WTC11 (cell line): ENCODE measurements at regions of chr13 and their contacts with region 1.

Region 1: GRCh38 chr13:98653463-98653985 is 76.6 kb upstream of the STK24 start:
- DNase-seq: peak; percentile 88
- ATAC-seq: peak; percentile 97
- H3K4me3 Mint-ChIP-seq: no peak overlapping the region
- H3K27ac Mint-ChIP-seq: peak overlapping the region; percentile 58; the same call in 1 of the 2 replicates
- H3K4me1 Mint-ChIP-seq: peaks cover 8% of the 10 kb centered on the region; the same call in 1 of the 2 replicates
- H3K27me3 Mint-ChIP-seq: no peaks in the 10 kb centered on the region; the same call in 1 of the 2 replicates
- CTCF ChIP-seq: peak; percentile 66

Region 2: DNA sequence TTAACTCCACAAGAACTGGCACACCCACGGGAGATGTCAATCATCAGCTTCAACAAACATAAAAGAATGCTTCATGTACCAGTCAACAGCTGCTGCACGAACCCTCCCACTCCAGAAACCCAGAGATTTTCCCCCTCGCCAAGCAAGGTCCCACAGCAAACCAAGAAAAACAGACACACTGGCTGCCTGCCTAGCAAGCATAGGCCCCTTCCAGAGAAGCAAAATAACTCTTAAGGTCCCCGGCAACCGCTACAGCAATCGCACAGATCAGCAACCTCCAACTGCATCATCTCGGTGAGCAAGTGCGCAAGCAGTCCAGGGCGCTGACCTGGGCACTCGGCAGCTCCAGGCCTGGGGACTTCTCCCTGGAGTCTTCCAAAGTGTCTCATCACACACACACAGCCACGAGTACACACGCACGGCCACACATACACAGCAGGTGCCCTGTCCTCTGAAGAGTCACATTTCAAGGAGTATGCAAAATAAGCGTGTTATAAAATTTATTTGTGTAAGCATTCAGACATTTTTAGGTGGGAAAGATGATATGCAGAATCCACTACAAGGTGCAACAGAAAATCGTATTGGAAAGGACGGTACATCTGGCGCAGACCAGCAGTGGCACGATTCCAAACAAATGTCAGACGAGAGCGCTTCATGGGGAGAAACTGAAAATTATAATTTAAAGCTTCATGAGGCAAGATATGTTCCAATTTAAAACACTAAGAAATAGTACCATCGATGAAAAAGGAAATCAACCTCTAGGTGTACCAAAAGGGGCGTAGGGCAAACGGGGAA is 201.7 kb before region 1 on chr13:
- CTCF ChIA-PET with region 1: interaction called, 67 read pairs
- POLR2A ChIA-PET with region 1: no interaction called
- DNase-seq: no peak
- ATAC-seq: no peak
- H3K4me3 Mint-ChIP-seq: no peak overlapping the region
- H3K27ac Mint-ChIP-seq: peak overlapping the region; percentile 28
- H3K4me1 Mint-ChIP-seq: peaks cover 28% of the 10 kb centered on the region
- H3K27me3 Mint-ChIP-seq: no peaks in the 10 kb centered on the region
- CTCF ChIP-seq: no peak

Region 3: GRCh38 chr13:98466634-98467236 is 186.8 kb before region 1 on chr13:
- CTCF ChIA-PET with region 1: interaction called, 14 read pairs
- POLR2A ChIA-PET with region 1: no interaction called
- DNase-seq: peak; percentile 87
- ATAC-seq: peak; percentile 90
- H3K4me3 Mint-ChIP-seq: no peak overlapping the region
- H3K27ac Mint-ChIP-seq: no peak overlapping the region
- H3K4me1 Mint-ChIP-seq: peaks cover 18% of the 10 kb centered on the region
- H3K27me3 Mint-ChIP-seq: no peaks in the 10 kb centered on the region
- CTCF ChIP-seq: peak; percentile 74

Region 4: DNA sequence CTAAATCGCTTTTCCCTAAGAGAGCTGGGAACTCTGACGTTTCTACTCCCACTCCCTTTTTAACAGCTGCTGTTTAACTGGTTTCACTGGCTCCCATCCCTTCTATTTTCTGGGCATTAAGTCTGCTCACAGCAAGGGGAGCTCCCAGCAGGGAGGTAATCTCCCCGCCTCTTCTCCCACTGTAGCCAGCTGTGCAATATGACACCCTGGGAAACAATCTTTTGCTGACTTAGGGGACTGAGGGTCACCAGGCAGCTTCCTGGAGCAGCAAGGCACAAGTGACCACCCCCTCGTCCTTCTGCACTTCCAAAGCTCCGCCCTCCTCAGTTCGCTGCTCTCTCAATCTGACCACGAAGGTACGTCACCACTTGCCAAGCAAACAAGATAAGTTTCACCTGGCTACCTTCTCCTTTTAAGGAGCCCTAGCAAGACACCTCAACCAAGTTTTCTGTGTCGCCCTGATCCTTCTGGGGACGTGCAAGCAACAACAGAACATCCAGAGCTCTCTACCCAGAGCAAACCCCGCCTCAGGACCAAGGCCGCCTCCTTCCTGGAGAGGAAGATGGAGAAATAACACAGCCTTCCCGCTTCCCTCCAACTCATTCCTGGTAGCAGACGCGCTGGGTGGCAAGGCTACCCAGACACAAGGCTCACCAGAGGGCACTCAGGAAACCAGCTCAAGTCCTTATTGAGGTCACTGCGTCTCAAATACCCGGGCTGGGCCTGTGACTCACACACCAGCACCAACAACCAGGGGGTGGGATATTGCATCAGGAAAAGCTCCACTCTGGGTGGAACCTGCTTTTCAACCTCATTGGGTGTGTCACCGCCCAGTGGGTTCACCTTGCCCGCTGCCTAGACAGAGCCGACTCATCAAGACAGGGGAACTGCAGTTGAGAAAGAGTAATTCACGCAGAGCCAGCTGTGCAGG is 169.0 kb before region 1 on chr13:
- CTCF ChIA-PET with region 1: interaction called, 72 read pairs
- POLR2A ChIA-PET with region 1: no interaction called
- DNase-seq: peak; percentile 71
- ATAC-seq: peak; percentile 80
- H3K4me3 Mint-ChIP-seq: peak overlapping the region; percentile 50
- H3K27ac Mint-ChIP-seq: peak overlapping the region; percentile 93
- H3K4me1 Mint-ChIP-seq: peaks cover 89% of the 10 kb centered on the region
- H3K27me3 Mint-ChIP-seq: no peaks in the 10 kb centered on the region
- CTCF ChIP-seq: no peak

Region 5: GRCh38 chr13:98509271-98510155 is 144.0 kb before region 1 on chr13:
- CTCF ChIA-PET with region 1: interaction called, 12 read pairs
- POLR2A ChIA-PET with region 1: no interaction called
- DNase-seq: no peak
- ATAC-seq: no peak
- H3K4me3 Mint-ChIP-seq: no peak overlapping the region
- H3K27ac Mint-ChIP-seq: peak overlapping the region; percentile 46; the same call in 1 of the 2 replicates
- H3K4me1 Mint-ChIP-seq: peaks cover 65% of the 10 kb centered on the region
- H3K27me3 Mint-ChIP-seq: no peaks in the 10 kb centered on the region
- CTCF ChIP-seq: no peak

Region 6: DNA sequence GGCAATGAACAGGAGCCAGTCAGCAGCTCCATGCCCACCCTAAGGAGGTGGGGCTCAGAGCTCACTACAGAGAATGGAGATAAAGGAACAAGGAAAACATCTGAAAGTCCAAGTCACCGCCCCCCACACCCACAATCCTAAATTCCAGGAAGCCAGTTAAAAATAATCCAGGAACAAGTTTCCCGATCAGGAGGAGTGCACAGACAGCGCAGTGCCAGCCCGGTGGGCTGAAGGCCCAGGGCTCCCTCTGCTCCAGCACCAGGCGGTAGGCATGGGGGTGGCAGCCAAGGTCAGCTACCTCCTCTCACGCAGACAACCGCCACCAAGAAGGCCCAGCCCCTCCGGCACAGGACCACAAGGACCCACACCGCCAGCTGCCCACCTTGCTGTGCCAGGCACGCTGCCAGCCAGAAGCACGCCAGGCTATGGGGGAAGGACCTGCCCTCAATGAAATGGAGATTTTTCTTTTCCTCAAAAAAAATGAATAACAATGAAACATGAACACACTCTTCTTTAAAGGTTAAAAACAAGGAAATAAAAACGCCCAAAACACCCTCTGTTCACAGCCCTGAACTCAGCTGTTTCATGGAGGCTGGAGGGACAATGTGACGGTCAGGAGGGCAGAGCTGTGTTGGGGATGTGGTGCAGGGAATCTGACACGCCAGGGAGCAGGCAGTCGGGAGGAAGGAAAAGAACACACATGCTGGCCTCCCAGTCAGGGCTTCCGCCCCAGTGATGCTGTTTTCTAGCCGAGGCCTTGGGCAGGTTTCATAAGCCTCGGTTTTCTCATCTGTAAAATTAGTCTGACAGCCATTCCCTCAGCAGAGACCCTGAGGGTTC is 87.6 kb before region 1 on chr13:
- CTCF ChIA-PET with region 1: interaction called, 12 read pairs
- POLR2A ChIA-PET with region 1: no interaction called
- DNase-seq: no peak
- ATAC-seq: no peak; the same call in 1 of the 2 replicates
- H3K4me3 Mint-ChIP-seq: no peak overlapping the region
- H3K27ac Mint-ChIP-seq: peak overlapping the region; percentile 48
- H3K4me1 Mint-ChIP-seq: peaks cover 90% of the 10 kb centered on the region
- H3K27me3 Mint-ChIP-seq: no peaks in the 10 kb centered on the region
- CTCF ChIP-seq: no peak

Region 7: DNA sequence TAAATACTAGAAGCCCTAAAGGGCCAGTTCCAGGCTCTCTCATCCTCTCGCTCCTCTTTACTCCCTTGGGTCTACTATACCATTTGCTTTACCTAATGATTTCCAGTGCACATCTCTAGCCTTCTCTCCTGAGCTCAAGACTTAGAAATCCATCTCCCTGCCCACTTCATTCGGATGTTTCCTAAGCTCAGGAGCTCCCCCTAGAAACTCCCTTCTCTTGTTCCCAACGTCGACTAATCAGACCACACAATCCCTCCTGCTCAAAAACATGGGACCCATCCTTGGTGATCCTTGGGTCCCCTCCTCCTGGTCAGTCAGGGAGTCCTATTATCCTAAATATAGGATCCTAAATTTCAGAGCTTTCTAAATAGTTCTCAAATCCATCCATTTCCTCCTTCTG is 55.5 kb before region 1 on chr13:
- CTCF ChIA-PET with region 1: interaction called, 13 read pairs
- POLR2A ChIA-PET with region 1: no interaction called
- DNase-seq: no peak
- ATAC-seq: peak; percentile 87
- H3K4me3 Mint-ChIP-seq: no peak overlapping the region
- H3K27ac Mint-ChIP-seq: no peak overlapping the region
- H3K4me1 Mint-ChIP-seq: peaks cover 5% of the 10 kb centered on the region
- H3K27me3 Mint-ChIP-seq: no peaks in the 10 kb centered on the region
- CTCF ChIP-seq: no peak